GM23248 (cell line): ENCODE measurements at regions of chr6 and their contacts with region 1.

Region 1: GRCh38 chr6:137641474-137642077 is 147.4 kb upstream of the OLIG3 start:
- DNase-seq: peak; percentile 85
- H3K4me3 ChIP-seq: no peak overlapping the region
- H3K27ac ChIP-seq: no peak overlapping the region
- H3K4me1 ChIP-seq: peaks cover 9% of the 10 kb centered on the region; the same call in 1 of the 2 replicates
- H3K27me3 ChIP-seq: 0 out of 2 replicates have a peak, but pooled peaks cover 3% of the 10 kb centered on the region

Region 2: GRCh38 chr6:137089305-137089704 is 552.3 kb before region 1 on chr6:
- in situ Hi-C with region 1: loop called (anchors 10 kb)
- DNase-seq: no peak
- H3K4me3 ChIP-seq: no peak overlapping the region
- H3K27ac ChIP-seq: no peak overlapping the region
- H3K4me1 ChIP-seq: no peaks in the 10 kb centered on the region
- H3K27me3 ChIP-seq: peaks cover 12% of the 10 kb centered on the region; the same call in 1 of the 2 replicates

Region 3: GRCh38 chr6:137271245-137272183 is 370.1 kb before region 1 on chr6:
- in situ Hi-C with region 1: loop called (anchors 25 kb)
- DNase-seq: peak; percentile 72
- H3K4me3 ChIP-seq: no peak overlapping the region
- H3K27ac ChIP-seq: no peak overlapping the region
- H3K4me1 ChIP-seq: no peaks in the 10 kb centered on the region
- H3K27me3 ChIP-seq: peaks cover 7% of the 10 kb centered on the region; the same call in 1 of the 2 replicates

Region 4: GRCh38 chr6:138716013-138716412 is 1074.4 kb after region 1 on chr6:
- in situ Hi-C with region 1: no loop called
- DNase-seq: no peak
- H3K4me3 ChIP-seq: no peak overlapping the region
- H3K27ac ChIP-seq: no peak overlapping the region
- H3K4me1 ChIP-seq: no peaks in the 10 kb centered on the region
- H3K27me3 ChIP-seq: no peaks in the 10 kb centered on the region